ENCODE measurements at regions of chr11 and their contacts with region 1.

Region 1: GRCh38 chr11:6345366-6345765 is 25.1 kb upstream of the CAVIN3 start:
- DNase-seq: no peak
- ATAC-seq: no peak
- H3K4me3 ChIP-seq: no peak overlapping the region
- H3K27ac ChIP-seq: no peak overlapping the region
- H3K4me1 ChIP-seq: no peaks in the 10 kb centered on the region
- H3K27me3 ChIP-seq: no peaks in the 10 kb centered on the region
- CTCF ChIP-seq: no peak

Region 2: GRCh38 chr11:6040874-6041273 is 304.5 kb before region 1 on chr11:
- intact Hi-C with region 1: no loop called
- DNase-seq: no peak
- ATAC-seq: no peak
- H3K4me3 ChIP-seq: no peak overlapping the region
- H3K27ac ChIP-seq: no peak overlapping the region
- H3K4me1 ChIP-seq: no peaks in the 10 kb centered on the region
- H3K27me3 ChIP-seq: no peaks in the 10 kb centered on the region
- CTCF ChIP-seq: no peak

Region 3: DNA sequence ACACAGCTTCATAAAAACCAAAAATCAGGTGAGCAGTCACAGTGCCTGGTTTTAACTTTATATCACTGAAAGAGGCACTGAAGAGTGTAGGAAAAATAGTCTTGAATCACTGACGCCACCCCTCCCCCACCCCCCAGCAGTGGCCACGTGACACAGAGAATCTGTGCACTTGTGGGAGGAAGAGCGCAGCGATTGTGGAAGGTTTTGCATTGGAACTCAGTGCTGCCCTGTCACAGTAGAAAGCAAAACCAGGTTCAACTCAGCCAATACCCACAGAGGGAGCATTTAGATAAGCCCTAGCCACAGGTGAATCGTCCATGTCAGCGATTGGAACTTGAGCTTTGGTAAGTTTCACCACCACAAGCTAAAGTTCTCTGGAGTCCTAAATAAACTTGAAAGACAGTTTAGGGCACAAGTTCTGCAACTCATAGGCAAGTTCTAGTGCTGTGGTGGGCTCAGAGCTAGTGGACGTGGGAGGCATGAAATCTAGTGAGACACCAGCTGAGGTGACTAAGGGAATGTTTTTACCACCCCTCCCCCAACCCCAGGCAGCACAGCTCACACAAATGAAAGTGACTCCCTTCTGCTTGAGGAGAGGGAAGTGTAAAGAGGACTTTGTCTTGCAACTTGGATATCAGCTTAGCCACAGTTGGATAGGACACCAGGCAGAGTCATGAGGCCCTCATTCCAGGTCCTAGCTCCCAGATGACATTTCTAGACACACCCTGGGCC is 188.6 kb before region 1 on chr11:
- intact Hi-C with region 1: no loop called
- DNase-seq: no peak
- ATAC-seq: peak; percentile 19
- H3K4me3 ChIP-seq: no peak overlapping the region
- H3K27ac ChIP-seq: no peak overlapping the region
- H3K4me1 ChIP-seq: no peaks in the 10 kb centered on the region
- H3K27me3 ChIP-seq: no peaks in the 10 kb centered on the region
- CTCF ChIP-seq: no peak

Region 4: GRCh38 chr11:6297831-6298230 is 47.5 kb before region 1 on chr11:
- intact Hi-C with region 1: no loop called
- DNase-seq: no peak
- ATAC-seq: no peak
- H3K4me3 ChIP-seq: no peak overlapping the region
- H3K27ac ChIP-seq: no peak overlapping the region
- H3K4me1 ChIP-seq: no peaks in the 10 kb centered on the region
- H3K27me3 ChIP-seq: no peaks in the 10 kb centered on the region
- CTCF ChIP-seq: peak; percentile 48

Region 5: GRCh38 chr11:6895010-6895409 is 549.6 kb after region 1 on chr11:
- intact Hi-C with region 1: no loop called
- DNase-seq: no peak
- ATAC-seq: no peak
- H3K4me3 ChIP-seq: no peak overlapping the region
- H3K27ac ChIP-seq: no peak overlapping the region
- H3K4me1 ChIP-seq: no peaks in the 10 kb centered on the region
- H3K27me3 ChIP-seq: no peaks in the 10 kb centered on the region
- CTCF ChIP-seq: no peak

Region 6: DNA sequence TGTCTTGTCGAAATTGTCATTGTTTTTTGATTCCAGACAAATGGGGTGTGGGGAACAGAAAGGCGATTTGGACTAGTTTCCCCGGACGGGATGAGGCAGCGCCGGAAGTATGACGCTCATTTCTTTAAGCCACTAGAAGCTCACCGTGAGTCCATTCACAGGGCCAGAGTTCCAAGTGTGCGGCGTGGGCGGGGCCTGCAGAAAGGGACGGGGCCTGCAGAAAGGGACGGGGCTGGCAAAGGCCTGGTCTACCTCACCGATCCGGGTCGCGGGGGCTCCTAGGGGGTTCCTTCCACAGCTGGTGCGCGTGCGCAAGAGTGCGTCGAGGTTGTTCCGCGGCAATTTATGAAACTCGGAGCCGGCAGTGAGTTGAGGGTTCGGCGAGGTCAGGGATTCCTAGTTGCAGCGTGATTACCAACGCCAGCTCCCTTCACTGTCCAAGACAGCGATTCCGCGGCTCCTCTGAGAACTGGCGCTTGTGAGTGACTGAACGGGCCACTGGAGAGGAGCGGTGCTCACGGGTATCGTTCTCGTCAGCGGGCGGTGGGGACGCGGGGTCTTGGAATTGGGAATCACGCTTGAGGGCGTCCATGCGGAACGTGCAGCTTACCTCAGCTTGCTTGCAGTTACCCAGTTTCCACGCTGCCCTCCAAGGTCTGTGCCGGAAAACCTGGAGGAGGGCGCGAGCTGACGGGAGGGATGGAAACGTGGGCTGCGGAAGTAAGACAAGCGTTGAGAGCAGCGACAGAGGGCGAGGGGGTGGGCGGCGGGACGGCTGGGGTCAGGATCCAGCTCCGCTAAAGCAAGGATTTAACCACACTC is 581.1 kb after region 1 on chr11 and contains the start of gene ZNF215:
- intact Hi-C with region 1: loop called (anchors 10 kb)
- DNase-seq: peak; percentile 91
- ATAC-seq: peak; percentile 94
- H3K4me3 ChIP-seq: peak within 1 kb of the TSS; percentile 70
- H3K27ac ChIP-seq: peak within 1 kb of the TSS; percentile 61
- H3K4me1 ChIP-seq: peaks cover 9% of the 10 kb centered on the region
- H3K27me3 ChIP-seq: no peaks in the 10 kb centered on the region
- CTCF ChIP-seq: no peak
- total RNA-seq, gene ZNF215: 2.4 TPM